Vagina (tissue), 2 donors: ENCODE measurements at regions of chr17 and their contacts with region 1.

Region 1: GRCh38 chr17:49997791-49998703 is 3.0 kb upstream of the DLX3 start:
- DNase-seq: no peak
- H3K4me3 ChIP-seq: no peak overlapping the region
- H3K27ac ChIP-seq: no peak overlapping the region
- H3K4me1 ChIP-seq: peaks cover 28% of the 10 kb centered on the region
- H3K27me3 ChIP-seq: no peaks in the 10 kb centered on the region
- CTCF ChIP-seq: peak; percentile 84 to 99 (median 90)
- POLR2A ChIP-seq: no peak

Region 2: GRCh38 chr17:49707608-49708514 is 290.2 kb before region 1 on chr17 and contains the start of gene SLC35B1:
- intact Hi-C with region 1: loop called (anchors 5 kb)
- DNase-seq: peak; percentile 98
- H3K4me3 ChIP-seq: peak within 1 kb of the TSS; percentile 77 to 78
- H3K27ac ChIP-seq: peak within 1 kb of the TSS; percentile 93
- H3K4me1 ChIP-seq: peaks cover 36% of the 10 kb centered on the region
- H3K27me3 ChIP-seq: no peaks in the 10 kb centered on the region
- CTCF ChIP-seq: peak; percentile 26 to 43 (median 35)
- POLR2A ChIP-seq: no peak
- total RNA-seq, gene SLC35B1: 42.0 TPM

Region 3: GRCh38 chr17:49861150-49861892 is 136.7 kb before region 1 on chr17:
- intact Hi-C with region 1: loop called (anchors 5 kb)
- DNase-seq: no peak
- H3K4me3 ChIP-seq: no peak overlapping the region
- H3K27ac ChIP-seq: no peak overlapping the region
- H3K4me1 ChIP-seq: peaks cover 4% of the 10 kb centered on the region
- H3K27me3 ChIP-seq: no peaks in the 10 kb centered on the region
- CTCF ChIP-seq: peak in 2 of 3 experiments; percentile 50 to 83
- POLR2A ChIP-seq: no peak

Region 4: GRCh38 chr17:49880291-49881053 is 117.6 kb before region 1 on chr17:
- intact Hi-C with region 1: loop called (anchors 5 kb)
- DNase-seq: no peak
- H3K4me3 ChIP-seq: peak overlapping the region in 1 of 2 donors; percentile 29
- H3K27ac ChIP-seq: no peak overlapping the region
- H3K4me1 ChIP-seq: no peaks in the 10 kb centered on the region
- H3K27me3 ChIP-seq: no peaks in the 10 kb centered on the region
- CTCF ChIP-seq: peak; percentile 70 to 84 (median 76)
- POLR2A ChIP-seq: no peak

Region 5: GRCh38 chr17:50550661-50551432 is 552.8 kb after region 1 on chr17:
- intact Hi-C with region 1: no loop called
- DNase-seq: no peak
- H3K4me3 ChIP-seq: no peak overlapping the region
- H3K27ac ChIP-seq: peak overlapping the region; percentile 65
- H3K4me1 ChIP-seq: peaks cover 19% of the 10 kb centered on the region
- H3K27me3 ChIP-seq: no peaks in the 10 kb centered on the region
- CTCF ChIP-seq: peak; percentile 46 to 80 (median 50)
- POLR2A ChIP-seq: no peak